ENCODE measurements at regions of chr6 and their contacts with region 1.

Region 1: GRCh38 chr6:107674995-107675738 is 148.9 kb downstream of the SCML4 start:
- DNase-seq: peak; percentile 81
- H3K4me3 ChIP-seq: no peak overlapping the region
- H3K27ac ChIP-seq: no peak overlapping the region
- H3K4me1 ChIP-seq: peaks cover 13% of the 10 kb centered on the region
- H3K27me3 ChIP-seq: peaks cover 8 to 14% of the 10 kb centered on the region in 2 experiments
- CTCF ChIP-seq: peak; percentile 83 to 87
- POLR2A ChIP-seq: no peak

Region 2: GRCh38 chr6:107132330-107132954 is 542.7 kb before region 1 on chr6:
- CTCF ChIA-PET with region 1: interaction called, 6 read pairs
- POLR2A ChIA-PET with region 1: no interaction called
- dilution Hi-C with region 1: no loop called
- intact Hi-C with region 1: loop called (anchors 1 kb)
- DNase-seq: peak; percentile 32
- H3K4me3 ChIP-seq: no peak overlapping the region
- H3K27ac ChIP-seq: no peak overlapping the region
- H3K4me1 ChIP-seq: peaks cover 6% of the 10 kb centered on the region
- H3K27me3 ChIP-seq: no peaks in the 10 kb centered on the region
- CTCF ChIP-seq: peak; percentile 38 to 46
- POLR2A ChIP-seq: no peak

Region 3: DNA sequence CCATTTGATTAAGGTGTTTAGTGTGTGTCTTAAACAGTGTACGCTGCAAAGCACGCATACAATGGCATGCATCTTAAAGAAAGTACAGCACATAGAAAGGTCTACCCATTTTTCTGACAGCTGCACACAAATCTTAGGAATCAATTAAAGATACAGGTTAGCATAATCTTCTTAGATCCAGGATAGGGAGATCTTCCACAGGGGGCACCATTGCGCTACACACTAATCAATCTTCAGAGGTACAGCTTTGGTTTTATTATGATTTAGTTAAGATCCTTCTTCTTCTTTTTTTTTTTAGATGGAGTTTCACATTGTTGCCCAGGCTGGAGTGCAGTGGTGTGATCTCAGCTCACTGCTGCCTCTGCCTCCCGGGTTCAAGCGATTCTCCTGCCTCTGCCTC is 496.2 kb before region 1 on chr6:
- CTCF ChIA-PET with region 1: interaction called, 7 read pairs
- POLR2A ChIA-PET with region 1: no interaction called
- dilution Hi-C with region 1: no loop called
- intact Hi-C with region 1: loop called (anchors 1 kb)
- DNase-seq: peak; percentile 30
- H3K4me3 ChIP-seq: no peak overlapping the region
- H3K27ac ChIP-seq: no peak overlapping the region
- H3K4me1 ChIP-seq: no peaks in the 10 kb centered on the region
- H3K27me3 ChIP-seq: no peaks in the 10 kb centered on the region
- CTCF ChIP-seq: peak; percentile 10 to 25
- POLR2A ChIP-seq: no peak

Measured in endothelial cell of umbilical vein (primary cell).